Calu3 (cell line): ENCODE measurements at regions of chr5 and their contacts with region 1.

Region 1: DNA sequence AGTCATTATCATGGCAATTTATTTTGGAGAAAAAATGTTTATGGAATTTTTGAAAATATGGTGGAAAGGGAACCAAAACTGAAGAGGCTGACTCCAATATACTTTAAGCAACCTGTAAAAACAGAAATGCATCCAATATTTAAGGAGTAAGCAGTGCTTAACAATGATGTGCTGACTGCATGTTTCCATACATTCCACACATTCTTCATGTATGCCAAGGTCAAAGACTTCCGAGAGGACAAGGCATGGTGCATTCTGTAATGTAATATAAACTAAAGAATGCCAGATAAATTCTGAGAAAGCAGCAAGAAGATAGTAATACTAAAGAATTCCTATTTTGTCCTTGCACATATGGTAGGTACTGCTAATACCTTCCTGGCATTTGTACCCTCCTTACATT is 2015.9 kb upstream of the CDH9 start:
- DNase-seq: no peak
- H3K4me3 Mint-ChIP-seq: no peak overlapping the region
- H3K27ac Mint-ChIP-seq: no peak overlapping the region
- H3K4me1 Mint-ChIP-seq: no peaks in the 10 kb centered on the region
- H3K27me3 Mint-ChIP-seq: no peaks in the 10 kb centered on the region
- CTCF ChIP-seq: no peak

Region 2: DNA sequence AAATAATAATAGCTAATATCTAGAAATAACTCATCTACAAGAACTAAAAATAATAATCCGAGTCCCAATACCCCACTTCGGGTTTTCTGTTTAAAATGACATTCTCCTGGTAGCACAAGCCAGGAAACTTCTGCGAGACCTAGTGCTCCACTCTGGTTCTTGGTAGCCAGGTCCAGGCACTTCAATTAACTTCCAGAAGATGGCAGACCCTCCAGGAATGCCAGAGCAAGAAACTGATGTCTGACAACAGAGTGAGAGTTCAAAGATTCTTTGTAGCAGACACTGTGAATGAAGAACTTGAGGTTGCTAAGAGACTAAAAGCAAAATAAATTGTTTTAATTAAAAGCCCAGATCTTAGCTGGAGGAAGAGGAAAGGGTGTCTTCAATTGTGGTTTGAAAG is 52.6 kb before region 1 on chr5:
- CTCF ChIA-PET with region 1: no interaction called
- intact Hi-C with region 1: no loop called
- DNase-seq: no peak
- H3K4me3 Mint-ChIP-seq: no peak overlapping the region
- H3K27ac Mint-ChIP-seq: no peak overlapping the region
- H3K4me1 Mint-ChIP-seq: no peaks in the 10 kb centered on the region
- H3K27me3 Mint-ChIP-seq: no peaks in the 10 kb centered on the region
- CTCF ChIP-seq: no peak

Region 3: DNA sequence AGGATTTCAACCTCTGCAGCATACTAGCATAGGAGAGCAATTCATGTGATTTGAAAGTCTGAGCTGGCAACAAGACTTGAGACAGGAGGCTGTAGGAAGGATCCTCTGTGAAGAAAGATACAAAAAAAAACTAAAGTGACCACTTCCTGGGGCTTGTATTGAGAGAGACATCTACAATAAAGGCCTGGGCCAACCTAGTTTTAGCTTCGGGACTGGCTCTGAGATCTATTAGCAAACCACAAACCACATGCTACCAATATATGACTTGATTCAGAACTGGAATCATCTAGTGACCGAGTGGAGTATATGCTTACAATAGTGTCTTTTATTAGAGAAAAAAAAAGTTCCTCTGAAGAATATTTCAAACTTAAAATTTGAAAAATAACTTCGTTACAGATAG is 690.3 kb after region 1 on chr5:
- CTCF ChIA-PET with region 1: no interaction called
- intact Hi-C with region 1: no loop called
- DNase-seq: no peak
- H3K4me3 Mint-ChIP-seq: no peak overlapping the region
- H3K27ac Mint-ChIP-seq: no peak overlapping the region
- H3K4me1 Mint-ChIP-seq: no peaks in the 10 kb centered on the region
- H3K27me3 Mint-ChIP-seq: no peaks in the 10 kb centered on the region
- CTCF ChIP-seq: no peak

Region 4: GRCh38 chr5:30479696-30480095 is 1425.4 kb after region 1 on chr5:
- CTCF ChIA-PET with region 1: interaction called, 11 read pairs
- intact Hi-C with region 1: no loop called
- DNase-seq: no peak
- H3K4me3 Mint-ChIP-seq: no peak overlapping the region
- H3K27ac Mint-ChIP-seq: no peak overlapping the region
- H3K4me1 Mint-ChIP-seq: no peaks in the 10 kb centered on the region
- H3K27me3 Mint-ChIP-seq: no peaks in the 10 kb centered on the region
- CTCF ChIP-seq: no peak